AG04450 (cell line): ENCODE measurements at regions of chr3 and their contacts with region 1.

Region 1: DNA sequence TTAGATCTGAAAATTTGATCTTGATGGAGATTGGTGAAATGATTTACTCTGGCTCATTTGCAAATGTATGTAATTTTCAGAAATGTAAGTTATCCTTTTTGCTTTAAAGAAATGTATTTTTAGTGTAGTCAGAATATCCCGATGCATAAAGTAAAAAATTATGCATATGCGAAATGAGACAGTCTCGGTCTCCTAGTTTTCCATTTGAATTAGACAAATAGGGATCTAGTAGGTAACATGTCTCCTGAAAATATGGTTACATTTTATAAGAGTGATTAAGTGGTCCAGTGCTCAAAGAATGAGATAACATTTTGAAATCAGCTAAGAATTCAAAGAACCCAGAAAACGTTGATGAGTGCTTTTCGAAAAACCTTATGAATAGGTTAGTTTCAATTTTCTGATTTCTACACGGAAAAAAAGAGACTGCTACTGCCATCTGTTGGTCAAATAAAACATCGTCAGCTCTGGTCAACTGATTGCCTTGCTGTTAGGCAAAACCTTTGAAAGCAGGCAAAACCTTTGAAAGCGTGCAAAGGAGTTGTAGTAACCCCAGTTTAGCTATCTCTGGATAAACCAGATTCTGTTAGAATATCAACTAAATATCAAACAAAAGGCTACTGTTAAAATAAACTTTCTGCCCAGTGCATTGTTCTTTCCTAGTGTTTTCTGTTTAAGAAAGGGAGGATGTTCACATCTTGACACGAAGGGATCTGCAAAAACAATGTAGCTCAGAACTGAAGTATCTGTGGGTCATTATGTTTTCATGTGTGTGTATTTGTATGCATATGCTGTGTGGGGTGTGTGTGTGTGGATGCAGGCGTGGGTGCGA is 59.3 kb upstream of the CHMP2B start:
- DNase-seq: no peak
- H3K4me3 ChIP-seq: peak overlapping the region; percentile 42
- H3K27ac ChIP-seq: no peak overlapping the region
- H3K27me3 ChIP-seq: no peaks in the 10 kb centered on the region
- CTCF ChIP-seq: peak; percentile 71

Region 2: GRCh38 chr3:86766331-86766730 is 401.5 kb before region 1 on chr3:
- CTCF ChIA-PET with region 1: interaction called, 17 read pairs
- POLR2A ChIA-PET with region 1: no interaction called
- DNase-seq: no peak
- H3K4me3 ChIP-seq: no peak overlapping the region
- H3K27ac ChIP-seq: no peak overlapping the region
- H3K27me3 ChIP-seq: no peaks in the 10 kb centered on the region
- CTCF ChIP-seq: no peak

Region 3: GRCh38 chr3:86785386-86785785 is 382.5 kb before region 1 on chr3:
- CTCF ChIA-PET with region 1: interaction called, 22 read pairs
- POLR2A ChIA-PET with region 1: no interaction called
- DNase-seq: no peak
- H3K4me3 ChIP-seq: no peak overlapping the region
- H3K27ac ChIP-seq: no peak overlapping the region
- H3K27me3 ChIP-seq: no peaks in the 10 kb centered on the region
- CTCF ChIP-seq: peak; percentile 67

Region 4: DNA sequence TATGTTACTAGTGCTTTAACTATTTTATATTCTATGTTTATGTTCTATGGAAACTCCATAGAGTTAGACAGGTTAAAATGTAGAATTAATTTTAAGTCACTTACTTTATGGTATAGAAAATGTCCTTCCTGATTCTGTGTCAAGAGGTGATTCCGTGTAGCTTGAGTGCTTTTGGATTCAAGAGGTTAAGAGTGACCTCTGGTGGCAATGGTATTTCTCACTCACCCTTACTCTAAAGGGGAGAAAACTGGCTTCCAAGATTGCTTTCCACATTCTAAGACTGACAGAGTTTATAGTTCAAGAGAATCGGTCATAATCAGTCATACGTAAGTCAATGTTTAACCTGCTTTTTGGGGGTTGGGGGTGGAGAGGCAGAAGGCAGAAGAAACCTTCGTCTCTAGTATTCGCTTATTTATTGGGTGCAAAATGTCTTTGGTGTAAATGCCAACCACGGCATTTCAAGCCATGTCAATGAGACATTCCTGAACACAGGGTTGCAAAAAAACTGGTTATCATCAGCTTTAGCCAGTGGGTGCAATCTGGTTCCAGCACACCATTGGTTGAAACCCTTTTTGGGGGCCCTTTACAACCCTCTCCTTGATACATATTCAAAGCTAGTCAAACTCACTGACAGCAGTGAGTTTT is 84.9 kb before region 1 on chr3:
- CTCF ChIA-PET with region 1: interaction called, 10 read pairs
- POLR2A ChIA-PET with region 1: no interaction called
- DNase-seq: peak; percentile 30
- H3K4me3 ChIP-seq: no peak overlapping the region
- H3K27ac ChIP-seq: no peak overlapping the region
- H3K27me3 ChIP-seq: no peaks in the 10 kb centered on the region
- CTCF ChIP-seq: peak; percentile 78

Region 5: DNA sequence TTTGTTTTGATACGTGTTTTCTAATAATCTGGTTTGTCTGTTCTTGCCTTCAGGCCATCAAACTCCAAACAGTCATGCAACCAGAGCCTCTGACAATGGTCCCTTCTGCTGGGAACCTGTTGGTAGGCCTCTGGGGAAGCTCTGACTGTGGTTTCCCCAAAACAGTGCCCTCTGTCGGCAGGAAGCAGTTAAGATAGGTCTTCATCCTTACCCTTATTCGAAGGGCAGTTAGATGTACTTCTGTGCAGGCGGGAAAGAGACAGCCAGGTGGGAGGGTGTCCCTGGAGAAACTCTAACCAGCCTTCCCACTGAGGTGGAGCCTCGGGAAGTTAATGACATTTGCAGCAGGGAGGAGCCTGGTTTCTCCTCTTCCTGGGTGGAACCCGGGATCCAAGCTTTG is 22.3 kb before region 1 on chr3:
- CTCF ChIA-PET with region 1: interaction called, 12 read pairs
- POLR2A ChIA-PET with region 1: no interaction called
- DNase-seq: no peak
- H3K4me3 ChIP-seq: no peak overlapping the region
- H3K27ac ChIP-seq: no peak overlapping the region
- H3K27me3 ChIP-seq: no peaks in the 10 kb centered on the region
- CTCF ChIP-seq: peak; percentile 44